GM12878 (cell line): ENCODE measurements at regions of chr11 and their contacts with region 1.

Region 1: GRCh38 chr11:82867495-82868082 is 32.6 kb downstream of the PRCP start:
- DNase-seq: peak; percentile 26
- ATAC-seq: peak; percentile 74
- H3K4me3 ChIP-seq: no peak overlapping the region
- H3K27ac ChIP-seq: no peak overlapping the region
- H3K4me1 ChIP-seq: peaks cover 7% of the 10 kb centered on the region
- H3K27me3 ChIP-seq: no peaks in the 10 kb centered on the region
- CTCF ChIP-seq: peak; percentile 53 to 75 (median 64); a peak in 5 of 6 replicates
- EP300 ChIP-seq: no peak
- POLR2A ChIP-seq: no peak
- RAD21 ChIP-seq: peak; percentile 81

Region 2: GRCh38 chr11:82610671-82611070 is 256.9 kb before region 1 on chr11:
- CTCF ChIA-PET with region 1: no interaction called
- POLR2A ChIA-PET with region 1: no interaction called
- RAD21 ChIA-PET with region 1: no interaction called
- SMC1A ChIA-PET with region 1: no interaction called
- in situ Hi-C with region 1: no loop called
- intact Hi-C with region 1: no loop called
- DNase-seq: no peak
- ATAC-seq: no peak
- H3K4me3 ChIP-seq: no peak overlapping the region
- H3K27ac ChIP-seq: no peak overlapping the region
- H3K4me1 ChIP-seq: no peaks in the 10 kb centered on the region
- H3K27me3 ChIP-seq: no peaks in the 10 kb centered on the region
- CTCF ChIP-seq: no peak
- EP300 ChIP-seq: no peak
- POLR2A ChIP-seq: no peak
- RAD21 ChIP-seq: no peak

Region 3: GRCh38 chr11:82775736-82776346 is 91.7 kb before region 1 on chr11:
- CTCF ChIA-PET with region 1: interaction called, 11 read pairs
- POLR2A ChIA-PET with region 1: no interaction called
- RAD21 ChIA-PET with region 1: interaction called, 4 read pairs
- SMC1A ChIA-PET with region 1: interaction called, 8 read pairs
- in situ Hi-C with region 1: no loop called
- intact Hi-C with region 1: loop called (anchors 1 kb)
- DNase-seq: no peak
- ATAC-seq: peak; percentile 100
- H3K4me3 ChIP-seq: no peak overlapping the region
- H3K27ac ChIP-seq: no peak overlapping the region
- H3K4me1 ChIP-seq: no peaks in the 10 kb centered on the region
- H3K27me3 ChIP-seq: no peaks in the 10 kb centered on the region
- CTCF ChIP-seq: peak; percentile 76 to 90 (median 85)
- EP300 ChIP-seq: no peak
- POLR2A ChIP-seq: no peak
- RAD21 ChIP-seq: peak; percentile 64

Region 4: GRCh38 chr11:82889133-82890001 is 21.8 kb after region 1 on chr11:
- CTCF ChIA-PET with region 1: interaction called, 46 read pairs
- POLR2A ChIA-PET with region 1: no interaction called
- RAD21 ChIA-PET with region 1: interaction called, 8 read pairs
- SMC1A ChIA-PET with region 1: interaction called, 11 read pairs
- in situ Hi-C with region 1: no loop called
- intact Hi-C with region 1: no loop called
- DNase-seq: no peak
- ATAC-seq: peak; percentile 57
- H3K4me3 ChIP-seq: no peak overlapping the region
- H3K27ac ChIP-seq: no peak overlapping the region
- H3K4me1 ChIP-seq: peaks cover 4% of the 10 kb centered on the region; the same call in 1 of the 2 replicates
- H3K27me3 ChIP-seq: no peaks in the 10 kb centered on the region
- CTCF ChIP-seq: no peak
- EP300 ChIP-seq: no peak
- POLR2A ChIP-seq: no peak
- RAD21 ChIP-seq: no peak

Region 5: DNA sequence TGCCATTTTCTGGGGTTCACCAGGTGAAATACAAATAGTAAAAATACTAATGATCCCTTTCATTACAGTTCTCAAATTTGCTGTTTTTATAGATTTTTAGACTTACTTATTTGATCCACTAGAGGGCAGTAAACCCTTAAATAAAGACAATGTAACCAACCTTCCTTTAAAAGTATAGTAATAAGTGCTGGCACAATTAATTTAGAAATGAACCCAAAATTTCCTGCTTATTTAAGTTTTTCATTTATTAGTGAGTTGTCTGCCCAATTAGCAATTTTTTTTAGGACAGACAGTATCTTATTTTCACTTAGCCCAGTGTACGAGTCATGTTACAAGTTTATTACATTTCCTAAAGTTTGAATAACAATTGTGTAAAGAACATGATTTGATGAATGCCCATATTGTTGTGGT is 38.7 kb after region 1 on chr11:
- CTCF ChIA-PET with region 1: interaction called, 51 read pairs
- POLR2A ChIA-PET with region 1: interaction called, 8 read pairs
- RAD21 ChIA-PET with region 1: interaction called, 33 read pairs
- SMC1A ChIA-PET with region 1: interaction called, 57 read pairs
- in situ Hi-C with region 1: no loop called
- intact Hi-C with region 1: no loop called
- DNase-seq: no peak
- ATAC-seq: no peak
- H3K4me3 ChIP-seq: no peak overlapping the region
- H3K27ac ChIP-seq: peak overlapping the region; percentile 49; the same call in 1 of the 2 replicates
- H3K4me1 ChIP-seq: peaks cover 15% of the 10 kb centered on the region; the same call in 1 of the 2 replicates
- H3K27me3 ChIP-seq: no peaks in the 10 kb centered on the region
- CTCF ChIP-seq: peak in 1 of 3 experiments; percentile 32; a peak in 2 of 6 replicates
- EP300 ChIP-seq: no peak
- POLR2A ChIP-seq: no peak
- RAD21 ChIP-seq: peak; percentile 66

Region 6: GRCh38 chr11:83285771-83286528 is 418.4 kb after region 1 on chr11 and contains the start of gene CCDC90B:
- CTCF ChIA-PET with region 1: interaction called, 14 read pairs
- POLR2A ChIA-PET with region 1: no interaction called
- RAD21 ChIA-PET with region 1: interaction called, 4 read pairs
- SMC1A ChIA-PET with region 1: no interaction called
- in situ Hi-C with region 1: no loop called
- intact Hi-C with region 1: no loop called
- DNase-seq: peak; percentile 96
- ATAC-seq: peak; percentile 93
- H3K4me3 ChIP-seq: peak within 1 kb of the TSS; percentile 78
- H3K27ac ChIP-seq: peak within 1 kb of the TSS; percentile 96
- H3K4me1 ChIP-seq: peaks cover 21% of the 10 kb centered on the region
- H3K27me3 ChIP-seq: no peaks in the 10 kb centered on the region
- CTCF ChIP-seq: peak in 2 of 3 experiments; percentile 30 to 75; a peak in 3 of 6 replicates
- EP300 ChIP-seq: 0 out of 4 replicates have a peak, but pooled peaks of 1 of the 2 experiments have one; percentile 42
- POLR2A ChIP-seq: peak; percentile 96
- RAD21 ChIP-seq: no peak
- polyA plus RNA-seq, gene CCDC90B: 76.2 to 82.8 TPM